Right cardiac atrium (tissue), 5 donors: ENCODE measurements at regions of chr9 and their contacts with region 1.

Region 1: GRCh38 chr9:130997925-130998596 is 10.9 kb upstream of the LAMC3 start:
- DNase-seq: peak; percentile 62 to 88 (median 87)
- ATAC-seq: peak; percentile 66 to 83
- H3K4me3 ChIP-seq: no peak overlapping the region
- H3K27ac ChIP-seq: no peak overlapping the region
- H3K4me1 ChIP-seq: no peaks in the 10 kb centered on the region
- H3K27me3 ChIP-seq: no peaks in the 10 kb centered on the region

Region 2: DNA sequence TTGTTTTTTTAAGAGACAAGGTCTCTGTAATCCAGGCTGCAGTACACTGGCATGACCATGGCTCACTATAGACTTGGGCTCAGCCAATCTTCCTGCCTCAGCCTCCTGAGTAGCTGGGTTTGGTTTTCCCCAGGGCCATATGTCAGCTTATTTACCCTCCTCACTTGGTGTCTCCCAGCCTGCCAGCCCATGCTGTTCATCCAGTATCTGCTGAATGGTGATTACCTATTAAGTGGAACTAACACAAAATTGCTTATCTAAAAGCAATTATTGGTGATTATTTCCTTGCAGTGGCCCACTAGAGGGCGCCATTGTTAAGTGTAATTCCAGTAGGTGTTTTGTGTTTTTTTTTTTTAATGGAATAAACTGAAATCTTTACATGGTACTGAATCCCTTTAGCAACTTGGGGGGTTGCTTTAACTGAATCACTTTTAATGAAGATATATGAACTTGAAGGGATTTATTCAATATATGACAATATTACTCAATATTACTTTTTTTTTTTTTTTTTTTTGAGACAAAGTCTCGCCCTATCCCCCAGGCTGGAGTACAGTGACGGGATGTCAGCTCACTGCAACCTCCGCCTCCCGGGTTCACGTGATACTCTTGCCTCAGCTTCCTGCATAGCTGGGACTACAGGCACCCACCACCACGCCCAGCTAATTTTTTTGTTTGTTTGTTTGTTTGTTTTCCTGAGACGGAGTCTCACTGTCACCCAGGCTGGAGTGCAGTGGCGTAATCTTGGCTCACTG is 290.7 kb before region 1 on chr9:
- intact Hi-C with region 1: loop called (anchors 5 kb)
- DNase-seq: peak in 2 of 3 donors; percentile 71 to 84
- ATAC-seq: peak in 1 of 2 donors; percentile 36
- H3K4me3 ChIP-seq: no peak overlapping the region
- H3K27ac ChIP-seq: no peak overlapping the region
- H3K4me1 ChIP-seq: no peaks in the 10 kb centered on the region
- H3K27me3 ChIP-seq: no peaks in the 10 kb centered on the region